Motor neuron (in vitro differentiated cells): ENCODE measurements at regions of chr7 and their contacts with region 1.

Region 1: GRCh38 chr7:112898432-112899290 is 108.5 kb upstream of the TMEM168 start:
- ATAC-seq: peak in 3 of 8 experiments; percentile 86 to 91 (median 89)
- H3K4me3 ChIP-seq: no peak overlapping the region
- H3K27ac ChIP-seq: no peak overlapping the region
- H3K4me1 ChIP-seq: no peaks in the 10 kb centered on the region

Region 2: DNA sequence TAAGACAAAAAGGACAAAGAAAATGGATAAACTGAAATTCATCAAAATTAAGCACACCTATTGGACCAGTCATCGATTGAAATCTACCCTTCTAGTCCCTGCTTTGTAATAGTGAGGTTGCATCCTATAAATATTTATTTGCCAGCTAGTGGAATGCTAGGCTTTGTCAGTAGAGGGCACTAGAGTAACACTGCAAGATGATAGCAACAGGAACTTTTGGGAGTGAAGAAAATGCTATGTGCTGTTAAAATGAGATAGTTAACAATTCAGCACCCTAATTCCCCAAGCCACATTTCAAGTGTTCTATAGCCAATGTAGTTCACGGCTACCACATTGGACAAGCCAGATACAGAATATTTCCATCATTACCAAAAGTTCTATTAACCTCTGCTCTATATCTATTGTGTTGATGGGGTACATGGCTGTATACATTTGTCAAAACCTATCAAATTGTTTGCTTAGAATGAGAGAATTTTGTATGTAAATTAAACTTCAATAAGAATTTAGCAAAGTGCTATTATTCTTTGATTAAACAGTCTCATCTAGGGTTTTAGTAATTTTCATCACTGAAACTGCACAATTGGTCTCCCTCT is 348.1 kb before region 1 on chr7:
- in situ Hi-C with region 1: loop called in 2 of 9 experiments (anchors 25 kb)
- ATAC-seq: peak in 3 of 8 experiments; percentile 69 to 81 (median 78)
- H3K4me3 ChIP-seq: no peak overlapping the region
- H3K27ac ChIP-seq: no peak overlapping the region
- H3K4me1 ChIP-seq: no peaks in the 10 kb centered on the region

Region 3: DNA sequence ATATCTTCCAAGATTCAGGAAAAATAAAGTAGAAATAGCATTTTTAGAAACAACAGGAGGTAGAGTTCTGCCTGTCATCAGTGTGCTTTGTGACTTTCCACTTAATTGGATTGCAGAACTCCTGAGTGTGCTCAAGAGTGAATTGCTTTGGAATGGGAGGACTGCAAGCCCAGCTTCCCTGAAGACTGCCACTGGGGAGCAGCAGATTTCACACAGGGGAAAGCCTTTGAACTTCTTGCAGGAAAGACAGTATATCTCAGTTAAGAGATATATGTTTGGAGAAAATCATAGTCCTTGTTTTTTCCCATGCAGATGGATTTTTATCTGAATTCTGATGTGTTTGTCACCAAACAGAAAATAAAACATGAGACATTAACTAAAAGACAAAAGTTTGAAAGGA is 232.9 kb before region 1 on chr7:
- in situ Hi-C with region 1: loop called in 1 of 9 experiments (anchors 25 kb)
- ATAC-seq: peak in 2 of 8 experiments; percentile 24 to 31
- H3K4me3 ChIP-seq: no peak overlapping the region
- H3K27ac ChIP-seq: no peak overlapping the region
- H3K4me1 ChIP-seq: no peaks in the 10 kb centered on the region

Region 4: GRCh38 chr7:113086431-113086888 is 187.8 kb after region 1 on chr7 and contains the start of gene GPR85:
- in situ Hi-C with region 1: no loop called
- ATAC-seq: peak; percentile 63 to 93 (median 90)
- H3K4me3 ChIP-seq: peak within 1 kb of the TSS; percentile 40 to 54 (median 53)
- H3K27ac ChIP-seq: peak within 1 kb of the TSS; percentile 74 to 94
- H3K4me1 ChIP-seq: peaks cover 18 to 33% of the 10 kb centered on the region in 2 donors
- total RNA-seq, gene GPR85: 4.5 to 34.1 (median 15.4) TPM

Region 5: DNA sequence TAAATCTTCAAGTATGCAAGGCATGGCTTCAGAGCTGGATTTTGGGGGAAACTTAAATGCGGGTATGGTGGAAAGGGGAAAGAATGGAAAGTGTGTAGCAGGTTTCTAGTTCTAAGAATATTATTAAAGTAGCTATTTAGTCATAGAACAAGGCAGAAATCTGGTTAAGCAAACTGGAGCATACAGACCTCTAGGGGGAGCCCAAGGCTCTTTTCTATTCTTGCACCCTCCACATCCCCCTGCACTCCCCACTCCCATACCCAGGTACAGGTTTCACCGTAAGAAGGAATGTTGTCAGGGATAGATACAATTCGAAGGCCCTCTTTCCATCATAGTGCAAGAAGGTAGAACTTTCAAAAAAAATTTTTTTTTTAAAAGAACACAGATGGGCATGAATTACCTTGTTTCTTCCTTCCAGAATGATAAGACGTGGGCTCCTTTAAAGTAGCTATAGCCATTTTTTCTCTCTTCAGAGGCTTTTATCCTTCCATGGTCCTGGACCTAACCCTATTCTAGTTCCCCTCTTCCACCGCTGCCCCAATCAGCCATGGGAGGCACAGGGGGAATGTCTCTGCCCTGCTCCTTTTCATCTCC is 261.2 kb after region 1 on chr7:
- in situ Hi-C with region 1: no loop called
- ATAC-seq: peak in 3 of 8 experiments; percentile 55 to 68 (median 67)
- H3K4me3 ChIP-seq: no peak overlapping the region
- H3K27ac ChIP-seq: no peak overlapping the region
- H3K4me1 ChIP-seq: peaks cover 0 to 1% of the 10 kb centered on the region in 2 donors